B cell (primary cell): ENCODE measurements at regions of chr3 and their contacts with region 1.

Region 1: GRCh38 chr3:37967260-37967881 is 23.2 kb upstream of the VILL start:
- DNase-seq: peak; percentile 37
- ATAC-seq: peak; percentile 33
- H3K4me3 ChIP-seq: no peak overlapping the region
- H3K4me3 Mint-ChIP-seq: no peak overlapping the region
- H3K27ac ChIP-seq: no peak overlapping the region
- H3K27ac Mint-ChIP-seq: no peak overlapping the region
- H3K4me1 ChIP-seq: no peaks in the 10 kb centered on the region
- H3K4me1 Mint-ChIP-seq: no peaks in the 10 kb centered on the region
- H3K27me3 ChIP-seq: no peaks in the 10 kb centered on the region
- H3K27me3 Mint-ChIP-seq: peaks cover 13% of the 10 kb centered on the region
- CTCF ChIP-seq: peak; percentile 70

Region 2: DNA sequence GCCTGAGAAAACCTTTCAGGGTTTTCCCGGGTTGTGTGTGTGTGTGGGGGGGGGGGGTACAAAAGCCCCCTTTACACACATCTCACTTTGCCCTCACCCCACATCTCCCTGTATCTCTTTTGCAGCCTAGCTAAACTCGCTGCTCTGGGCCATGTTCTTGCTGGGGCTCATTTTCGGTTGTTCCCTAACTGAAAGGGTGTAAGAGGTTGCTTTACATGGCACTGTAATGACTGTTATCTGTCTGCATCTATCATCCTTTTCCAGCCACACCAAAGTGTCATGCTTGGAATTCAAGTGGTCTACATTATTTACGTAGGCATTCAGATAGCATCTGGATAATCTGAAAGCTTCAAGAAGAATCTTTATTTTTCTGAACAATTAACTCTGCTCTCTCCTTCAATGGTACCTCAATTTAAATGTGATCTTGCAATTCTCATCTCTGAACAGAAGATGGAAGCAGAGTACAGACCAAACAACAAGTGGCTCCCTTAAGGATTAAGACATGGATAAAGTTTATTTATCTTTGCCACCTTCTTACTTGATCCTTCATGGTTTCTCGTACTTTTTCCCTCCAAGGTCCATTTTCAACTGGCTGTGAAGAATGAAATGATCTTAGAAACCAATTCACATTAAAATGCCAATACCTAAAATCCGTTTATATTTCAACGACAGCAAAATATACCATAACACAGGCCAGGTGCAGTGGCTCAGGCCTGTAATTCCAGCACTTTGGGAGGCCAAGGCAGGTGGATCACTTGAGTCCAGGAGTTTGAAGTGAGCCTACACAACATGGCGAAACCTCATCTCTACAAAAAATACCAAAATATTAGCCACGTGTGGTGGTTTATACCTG is 1237.9 kb before region 1 on chr3:
- CTCF ChIA-PET with region 1: no interaction called
- POLR2A ChIA-PET with region 1: no interaction called
- intact Hi-C with region 1: loop called (anchors 10 kb)
- DNase-seq: peak; percentile 51
- ATAC-seq: peak; percentile 45
- H3K4me3 ChIP-seq: no peak overlapping the region
- H3K4me3 Mint-ChIP-seq: no peak overlapping the region
- H3K27ac ChIP-seq: no peak overlapping the region
- H3K27ac Mint-ChIP-seq: no peak overlapping the region
- H3K4me1 ChIP-seq: no peaks in the 10 kb centered on the region
- H3K4me1 Mint-ChIP-seq: no peaks in the 10 kb centered on the region
- H3K27me3 ChIP-seq: peaks cover 0 to 3% (median 0%) of the 10 kb centered on the region in 4 experiments
- H3K27me3 Mint-ChIP-seq: peaks cover 20% of the 10 kb centered on the region
- CTCF ChIP-seq: peak; percentile 75

Region 3: GRCh38 chr3:37855363-37855970 is 111.9 kb before region 1 on chr3:
- CTCF ChIA-PET with region 1: interaction called, 15 read pairs
- POLR2A ChIA-PET with region 1: no interaction called
- intact Hi-C with region 1: loop called (anchors 5 kb)
- DNase-seq: peak; percentile 61
- ATAC-seq: no peak
- H3K4me3 ChIP-seq: no peak overlapping the region
- H3K4me3 Mint-ChIP-seq: no peak overlapping the region
- H3K27ac ChIP-seq: no peak overlapping the region
- H3K27ac Mint-ChIP-seq: no peak overlapping the region
- H3K4me1 ChIP-seq: peaks cover 5 to 6% of the 10 kb centered on the region in 2 donors
- H3K4me1 Mint-ChIP-seq: no peaks in the 10 kb centered on the region
- H3K27me3 ChIP-seq: peaks cover 0 to 3% (median 0%) of the 10 kb centered on the region in 4 experiments
- H3K27me3 Mint-ChIP-seq: peaks cover 16% of the 10 kb centered on the region
- CTCF ChIP-seq: peak; percentile 81

Region 4: DNA sequence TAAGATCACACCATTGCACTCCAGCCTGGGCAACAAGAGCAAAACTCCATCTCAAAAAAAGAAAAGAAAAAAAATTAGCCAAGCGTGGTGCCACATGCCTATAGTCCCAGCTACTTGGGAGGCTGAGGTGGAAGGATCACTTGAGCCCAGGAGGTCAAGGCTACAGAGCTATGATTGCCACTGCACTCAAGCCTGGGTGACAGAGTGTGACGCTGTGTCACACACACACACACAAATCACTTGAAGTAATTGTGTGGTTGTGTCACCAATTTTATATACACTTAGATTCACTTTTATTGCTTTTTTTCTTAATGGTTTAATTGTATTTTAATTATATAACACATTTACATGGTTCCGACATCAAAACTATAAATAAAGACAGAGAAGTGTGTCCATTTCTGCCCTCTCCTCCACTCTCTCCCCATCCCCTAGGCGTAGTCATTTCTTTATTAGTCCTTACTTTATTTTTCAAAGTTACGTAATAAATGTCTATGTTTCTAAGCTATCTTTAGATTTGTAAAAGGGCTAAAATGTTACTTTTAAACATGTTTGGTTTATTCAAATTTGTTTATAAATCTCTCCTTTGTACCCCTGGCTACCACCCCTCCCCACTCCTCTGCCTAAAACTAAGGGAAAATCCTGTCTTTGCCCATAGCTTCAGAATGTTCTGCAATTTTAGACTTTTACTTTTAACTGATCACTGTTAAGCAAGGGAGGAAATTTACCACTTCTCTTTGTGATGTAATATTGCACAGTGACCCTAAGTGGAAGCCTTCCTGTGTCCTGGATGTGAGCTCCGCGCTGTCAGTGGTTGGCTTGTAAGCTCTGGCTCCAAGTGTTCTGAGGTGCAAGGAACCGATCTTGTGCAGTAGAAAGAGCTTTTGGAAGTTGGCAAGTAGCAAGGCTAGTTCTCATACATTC is 12.4 kb after region 1 on chr3:
- CTCF ChIA-PET with region 1: interaction called, 18 read pairs
- POLR2A ChIA-PET with region 1: no interaction called
- intact Hi-C with region 1: no loop called
- DNase-seq: no peak
- ATAC-seq: no peak
- H3K4me3 ChIP-seq: no peak overlapping the region
- H3K4me3 Mint-ChIP-seq: no peak overlapping the region
- H3K27ac ChIP-seq: no peak overlapping the region
- H3K27ac Mint-ChIP-seq: no peak overlapping the region
- H3K4me1 ChIP-seq: no peaks in the 10 kb centered on the region
- H3K4me1 Mint-ChIP-seq: no peaks in the 10 kb centered on the region
- H3K27me3 ChIP-seq: no peaks in the 10 kb centered on the region
- H3K27me3 Mint-ChIP-seq: peaks cover 8% of the 10 kb centered on the region
- CTCF ChIP-seq: no peak